Gastrocnemius medialis (tissue), 4 donors: ENCODE measurements at regions of chr16 and their contacts with region 1.

Region 1: GRCh38 chr16:13919683-13920509 is at the start of gene ERCC4:
- DNase-seq: peak; percentile 99 to 100
- ATAC-seq: peak; percentile 95 to 97
- H3K4me3 ChIP-seq: peak within 1 kb of the TSS; percentile 83 to 95 (median 90)
- H3K27ac ChIP-seq: peak within 1 kb of the TSS; percentile 78 to 93 (median 88)
- H3K4me1 ChIP-seq: peaks cover 28 to 32% of the 10 kb centered on the region in 2 donors
- H3K27me3 ChIP-seq: no peaks in the 10 kb centered on the region
- CTCF ChIP-seq: peak; percentile 85 to 98 (median 89)
- POLR2A ChIP-seq: peak; percentile 39 to 54
- total RNA-seq, gene ERCC4: 7.1 to 11.5 (median 8.4) TPM

Region 2: DNA sequence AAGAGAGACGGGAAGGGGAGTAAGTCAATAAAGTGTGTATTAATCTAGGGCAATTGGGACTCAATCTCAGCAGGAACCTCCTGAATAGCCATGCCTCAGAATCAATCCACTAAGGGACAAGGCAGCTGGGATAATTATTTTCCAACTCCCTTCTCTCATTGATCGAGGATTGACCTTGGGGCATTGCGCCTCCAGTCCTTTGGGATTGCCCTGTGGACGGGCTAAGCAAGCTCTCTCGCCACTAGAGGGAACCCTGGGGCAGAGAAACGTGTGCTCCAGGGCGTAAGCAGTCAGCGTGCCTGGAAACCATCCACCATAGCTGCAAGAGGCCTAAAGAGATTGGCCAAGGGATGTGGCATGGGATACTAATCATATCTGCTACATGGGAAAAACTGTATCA is 53.8 kb before region 1 on chr16:
- in situ Hi-C with region 1: no loop called
- intact Hi-C with region 1: loop called (anchors 1 kb)
- DNase-seq: peak; percentile 22 to 65
- ATAC-seq: peak; percentile 78 to 97
- H3K4me3 ChIP-seq: no peak overlapping the region
- H3K27ac ChIP-seq: no peak overlapping the region
- H3K4me1 ChIP-seq: no peaks in the 10 kb centered on the region
- H3K27me3 ChIP-seq: no peaks in the 10 kb centered on the region
- CTCF ChIP-seq: peak; percentile 44 to 77 (median 63)
- POLR2A ChIP-seq: no peak

Region 3: DNA sequence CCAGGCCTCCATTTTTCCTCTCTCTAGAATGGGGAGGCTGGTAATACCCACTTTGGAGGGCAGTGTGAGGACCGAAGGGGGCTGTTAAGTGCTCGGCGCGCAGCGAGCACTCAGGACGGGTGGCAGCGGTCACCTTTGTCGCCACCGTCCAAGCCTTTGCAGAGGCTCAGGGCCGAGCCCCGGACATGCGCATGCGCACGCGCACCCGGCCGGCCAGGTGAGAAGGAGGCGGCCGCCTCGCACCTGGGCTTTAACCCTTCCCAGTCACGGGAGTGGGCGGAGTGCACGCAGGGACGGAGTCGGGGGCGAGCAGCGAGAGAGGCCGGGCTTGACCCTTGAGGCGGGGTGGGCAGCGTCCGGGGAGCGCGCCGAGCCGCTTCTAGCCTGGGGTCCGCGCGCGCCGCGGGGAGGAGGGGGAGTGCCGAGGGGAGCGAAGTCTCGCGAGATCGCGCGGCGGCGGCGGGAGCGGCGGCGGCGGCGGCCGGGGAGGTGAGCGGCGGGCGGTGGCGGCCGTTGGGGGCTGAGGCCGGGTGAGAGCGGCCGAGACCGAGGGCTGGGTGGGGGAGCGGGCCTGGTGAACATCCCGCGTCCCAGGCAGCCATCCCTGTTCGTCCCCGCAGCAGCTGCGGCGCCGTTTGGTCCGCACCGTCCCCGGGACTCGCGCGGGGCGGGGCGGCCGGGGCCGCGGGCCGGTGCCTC is 151.1 kb after region 1 on chr16 and contains the start of gene MRTFB:
- in situ Hi-C with region 1: no loop called
- intact Hi-C with region 1: loop called (anchors 2 kb)
- DNase-seq: peak; percentile 41 to 63
- ATAC-seq: peak; percentile 90 to 94
- H3K4me3 ChIP-seq: peak within 1 kb of the TSS; percentile 75 to 96 (median 89)
- H3K27ac ChIP-seq: peak within 1 kb of the TSS; percentile 76 to 91 (median 86)
- H3K4me1 ChIP-seq: peaks cover 10 to 20% of the 10 kb centered on the region in 2 donors
- H3K27me3 ChIP-seq: no peaks in the 10 kb centered on the region
- CTCF ChIP-seq: no peak
- POLR2A ChIP-seq: peak; percentile 67 to 80
- total RNA-seq, gene MRTFB: 12.7 to 20.4 (median 14.8) TPM

Region 4: GRCh38 chr16:14186007-14186794 is 266.3 kb after region 1 on chr16:
- in situ Hi-C with region 1: loop called in 1 of 4 experiments (anchors 10 kb)
- intact Hi-C with region 1: loop called (anchors 2 kb)
- DNase-seq: peak; percentile 7 to 32
- ATAC-seq: peak; percentile 71 to 73
- H3K4me3 ChIP-seq: peak overlapping the region; percentile 57 to 65 (median 62)
- H3K27ac ChIP-seq: peak overlapping the region; percentile 87 to 92 (median 90)
- H3K4me1 ChIP-seq: peaks cover 45 to 62% of the 10 kb centered on the region in 2 donors
- H3K27me3 ChIP-seq: no peaks in the 10 kb centered on the region
- CTCF ChIP-seq: peak; percentile 47 to 66 (median 59)
- POLR2A ChIP-seq: peak; percentile 37 to 72

Region 5: GRCh38 chr16:14249291-14250032 is 329.6 kb after region 1 on chr16:
- in situ Hi-C with region 1: no loop called
- intact Hi-C with region 1: loop called (anchors 5 kb)
- DNase-seq: peak in 1 of 2 donors; percentile 30
- ATAC-seq: peak; percentile 40 to 63
- H3K4me3 ChIP-seq: no peak overlapping the region
- H3K27ac ChIP-seq: peak overlapping the region; percentile 12 to 45 (median 27)
- H3K4me1 ChIP-seq: peaks cover 0 to 3% of the 10 kb centered on the region in 2 donors
- H3K27me3 ChIP-seq: no peaks in the 10 kb centered on the region
- CTCF ChIP-seq: peak; percentile 68 to 86 (median 72)
- POLR2A ChIP-seq: no peak

Region 6: GRCh38 chr16:14529010-14529669 is 609.2 kb after region 1 on chr16:
- in situ Hi-C with region 1: loop called in 3 of 4 experiments (anchors 25 kb)
- intact Hi-C with region 1: loop called (anchors 2 kb)
- DNase-seq: peak; percentile 72 to 83
- ATAC-seq: peak; percentile 90 to 91
- H3K4me3 ChIP-seq: peak overlapping the region; percentile 26 to 49 (median 40)
- H3K27ac ChIP-seq: peak overlapping the region; percentile 82 to 92 (median 86)
- H3K4me1 ChIP-seq: peaks cover 23 to 44% of the 10 kb centered on the region in 2 donors
- H3K27me3 ChIP-seq: no peaks in the 10 kb centered on the region
- CTCF ChIP-seq: peak; percentile 74 to 88 (median 80)
- POLR2A ChIP-seq: peak; percentile 52 to 70

Region 7: GRCh38 chr16:14632692-14633569 is 713.0 kb after region 1 on chr16 and contains the start of gene BFAR:
- in situ Hi-C with region 1: no loop called
- intact Hi-C with region 1: loop called (anchors 5 kb)
- DNase-seq: peak; percentile 99
- ATAC-seq: peak; percentile 84 to 85
- H3K4me3 ChIP-seq: peak within 1 kb of the TSS; percentile 90 to 97 (median 96)
- H3K27ac ChIP-seq: peak within 1 kb of the TSS; percentile 98 to 99 (median 98)
- H3K4me1 ChIP-seq: peaks cover 44 to 45% of the 10 kb centered on the region in 2 donors
- H3K27me3 ChIP-seq: no peaks in the 10 kb centered on the region
- CTCF ChIP-seq: no peak
- POLR2A ChIP-seq: peak; percentile 99
- total RNA-seq, gene BFAR: 39.7 to 103 (median 65.5) TPM